Right ventricle myocardium inferior (tissue), 1 donor: ENCODE measurements at regions of chr7 and their contacts with region 1.

Region 1: GRCh38 chr7:30564243-30564892 is 30.3 kb upstream of the GARS1 start:
- DNase-seq: peak; percentile 76
- ATAC-seq: peak; percentile 94

Region 2: GRCh38 chr7:30164567-30164966 is 399.8 kb before region 1 on chr7:
- intact Hi-C with region 1: loop called (anchors 5 kb)
- DNase-seq: no peak
- ATAC-seq: peak; percentile 64

Region 3: GRCh38 chr7:30276203-30276900 is 288.0 kb before region 1 on chr7:
- intact Hi-C with region 1: loop called (anchors 5 kb)
- DNase-seq: no peak
- ATAC-seq: peak; percentile 50

Region 4: GRCh38 chr7:30510124-30511075 is 54.0 kb before region 1 on chr7:
- intact Hi-C with region 1: loop called (anchors 5 kb)
- DNase-seq: no peak
- ATAC-seq: no peak

Region 5: DNA sequence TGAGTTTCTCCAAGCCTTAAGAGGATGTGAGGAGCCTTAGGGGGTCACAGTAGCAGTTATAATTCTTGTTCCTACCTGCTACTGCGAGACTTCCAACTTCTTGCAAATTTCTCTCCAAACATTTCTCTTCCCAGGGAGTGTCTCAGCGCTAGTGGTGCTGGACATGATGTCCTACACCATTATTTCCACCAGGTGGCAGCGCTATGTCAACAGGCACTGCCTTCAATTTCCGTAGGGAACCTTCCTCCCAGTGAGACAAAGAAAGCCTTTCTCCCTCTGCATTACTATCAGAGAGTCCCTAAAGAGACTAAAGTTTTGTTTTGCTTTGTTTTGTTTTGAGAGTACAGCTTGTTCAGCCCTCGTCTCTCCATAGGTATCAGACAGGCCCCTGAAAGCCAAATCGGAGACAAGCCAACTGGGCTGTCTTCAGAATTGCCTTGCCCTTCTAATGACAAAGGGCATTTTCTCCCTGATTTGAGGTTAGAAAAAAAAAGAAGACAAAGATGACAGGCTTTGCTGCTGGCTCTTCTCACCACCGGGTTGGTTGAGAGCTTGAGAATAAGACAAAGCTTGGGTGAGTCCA is 15.5 kb before region 1 on chr7:
- intact Hi-C with region 1: loop called (anchors 2 kb)
- DNase-seq: no peak
- ATAC-seq: peak; percentile 79

Region 6: DNA sequence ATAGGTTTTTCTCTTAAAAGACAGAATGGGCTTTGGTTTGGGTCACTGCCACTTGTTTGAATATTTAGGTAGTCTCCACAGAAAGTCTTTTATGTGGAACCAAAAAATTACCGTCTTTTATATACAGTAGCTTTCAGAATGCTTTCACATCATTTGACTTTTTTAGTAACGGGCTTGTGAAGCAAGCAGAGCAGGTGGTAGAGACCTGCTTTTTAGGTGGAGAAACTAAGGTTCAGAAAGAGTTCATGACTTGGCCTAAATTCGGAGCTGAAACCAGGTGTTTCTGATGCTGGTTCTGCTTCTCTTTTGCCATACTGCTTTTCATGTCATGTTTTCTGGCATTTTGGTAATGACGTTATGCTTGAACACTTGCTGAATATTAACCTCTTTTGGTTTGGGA is 66.6 kb after region 1 on chr7:
- intact Hi-C with region 1: no loop called
- DNase-seq: no peak
- ATAC-seq: no peak